CD4-positive, alpha-beta T cell (primary cell): ENCODE measurements at regions of chr19 and their contacts with region 1.

Region 1: DNA sequence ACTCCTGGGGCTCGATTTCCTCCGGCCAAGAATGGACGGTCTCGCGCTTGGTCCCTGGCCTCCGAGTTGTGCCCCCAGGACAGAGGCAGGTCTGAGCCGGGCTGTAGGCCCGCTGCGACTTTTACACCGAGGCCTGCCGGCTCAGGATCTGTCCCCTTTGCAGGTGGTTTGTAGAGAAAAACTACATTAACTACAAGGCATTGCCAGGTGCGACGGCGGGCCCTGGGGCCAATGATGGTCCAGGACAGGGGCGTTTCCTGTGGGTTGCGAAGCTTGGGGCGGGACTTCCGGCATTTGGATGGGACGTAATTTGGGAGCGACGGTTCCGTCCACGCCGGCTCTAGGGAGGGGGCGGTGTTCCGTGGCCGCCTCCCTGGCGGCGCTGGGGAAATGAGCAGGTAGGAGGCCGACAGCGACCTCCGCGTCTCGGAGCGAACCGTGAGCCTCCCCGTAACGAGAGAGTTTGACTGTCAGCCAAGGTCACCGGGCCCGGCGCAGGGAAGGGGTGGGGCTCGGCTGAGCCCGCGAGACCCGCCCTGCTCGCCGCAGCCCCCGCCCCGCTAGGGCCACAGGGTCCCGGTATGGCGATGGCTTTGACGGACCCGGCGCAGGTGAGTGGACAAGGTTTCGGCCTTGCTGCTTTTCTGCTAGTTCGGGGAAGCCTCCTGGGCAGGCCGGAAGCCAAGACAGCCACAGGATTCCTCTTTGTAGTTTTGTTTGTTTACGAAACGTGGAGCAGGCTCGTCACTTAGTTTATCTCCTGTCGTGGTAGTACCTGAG is at the start of gene ZNF805:
- DNase-seq: peak; percentile 94 to 98 (median 96)
- ATAC-seq: peak; percentile 88
- H3K4me3 ChIP-seq: peak within 1 kb of the TSS; percentile 89
- H3K4me3 Mint-ChIP-seq: peak within 1 kb of the TSS; percentile 93
- H3K27ac ChIP-seq: peak within 1 kb of the TSS; percentile 89 to 96
- H3K27ac Mint-ChIP-seq: peak within 1 kb of the TSS; percentile 92
- H3K4me1 ChIP-seq: peaks cover 32% of the 10 kb centered on the region
- H3K4me1 Mint-ChIP-seq: peaks cover 40% of the 10 kb centered on the region
- H3K27me3 ChIP-seq: no peaks in the 10 kb centered on the region
- H3K27me3 Mint-ChIP-seq: no peaks in the 10 kb centered on the region
- CTCF ChIP-seq: no peak
- total RNA-seq, gene ZNF805: 33.1 to 33.7 TPM

Region 2: DNA sequence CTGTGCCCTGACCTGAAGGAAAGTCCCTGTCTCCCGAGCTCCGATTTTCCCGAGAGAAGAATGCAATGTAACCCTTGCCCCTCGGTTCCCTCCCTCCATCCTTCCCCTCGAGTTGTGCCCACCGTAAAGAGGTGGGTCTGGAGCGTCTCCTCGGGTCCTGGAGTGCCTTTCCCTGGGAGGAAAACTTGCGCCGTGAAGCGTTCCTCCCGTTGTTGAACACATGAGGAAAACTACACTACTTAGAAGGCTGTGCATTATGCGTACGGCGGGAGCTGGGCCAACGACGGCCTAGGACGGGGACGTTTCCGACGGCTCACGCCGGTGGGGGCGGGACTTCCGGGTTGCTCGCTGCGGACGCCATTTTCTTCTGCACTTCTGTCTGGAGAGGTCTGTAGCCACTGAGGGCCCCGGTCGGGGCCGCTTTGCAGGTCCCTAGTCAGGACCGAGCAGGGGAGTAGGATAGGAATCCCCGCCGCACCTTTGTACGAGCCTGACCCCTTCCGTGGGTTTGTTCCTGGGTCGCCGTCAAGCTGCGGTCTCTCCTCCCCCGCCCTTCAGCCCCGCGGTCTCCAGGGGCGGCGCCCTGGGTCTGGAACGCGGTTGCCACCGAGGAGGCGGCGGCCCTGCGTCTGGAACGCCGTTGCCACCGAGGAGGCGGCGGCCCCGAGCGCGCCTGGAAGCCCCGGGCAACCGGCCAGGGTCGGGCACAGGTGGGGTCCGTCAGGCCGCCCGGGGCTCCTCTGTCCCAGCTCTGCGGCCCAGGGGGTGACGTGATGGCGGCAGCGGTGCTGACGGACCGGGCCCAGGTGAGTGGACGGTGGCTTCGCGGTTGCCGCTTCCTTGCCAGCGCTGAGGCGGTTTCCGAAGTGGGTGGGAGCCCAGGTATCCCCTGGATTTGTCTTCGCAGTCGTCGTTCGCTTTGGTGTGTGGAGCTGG is 49.1 kb before region 1 on chr19 and contains the start of gene ZNF264:
- CTCF ChIA-PET with region 1: no interaction called
- POLR2A ChIA-PET with region 1: interaction called, 6 read pairs
- intact Hi-C with region 1: loop called (anchors 1 to 2 kb)
- DNase-seq: peak; percentile 84 to 93 (median 87)
- ATAC-seq: peak; percentile 93
- H3K4me3 ChIP-seq: peak within 1 kb of the TSS; percentile 91
- H3K4me3 Mint-ChIP-seq: peak within 1 kb of the TSS; percentile 97
- H3K27ac ChIP-seq: peak within 1 kb of the TSS; percentile 70 to 89
- H3K27ac Mint-ChIP-seq: peak within 1 kb of the TSS; percentile 98
- H3K4me1 ChIP-seq: peaks cover 27% of the 10 kb centered on the region
- H3K4me1 Mint-ChIP-seq: peaks cover 41% of the 10 kb centered on the region
- H3K27me3 ChIP-seq: peaks cover 0 to 4% of the 10 kb centered on the region in 2 experiments
- H3K27me3 Mint-ChIP-seq: peaks cover 13% of the 10 kb centered on the region
- CTCF ChIP-seq: no peak
- total RNA-seq, gene ZNF264: 40.5 to 40.7 TPM

Region 3: GRCh38 chr19:57212109-57212508 is 28.4 kb before region 1 on chr19:
- CTCF ChIA-PET with region 1: no interaction called
- POLR2A ChIA-PET with region 1: no interaction called
- intact Hi-C with region 1: no loop called
- DNase-seq: no peak
- ATAC-seq: no peak
- H3K4me3 ChIP-seq: no peak overlapping the region
- H3K4me3 Mint-ChIP-seq: no peak overlapping the region
- H3K27ac ChIP-seq: no peak overlapping the region
- H3K27ac Mint-ChIP-seq: no peak overlapping the region
- H3K4me1 ChIP-seq: no peaks in the 10 kb centered on the region
- H3K4me1 Mint-ChIP-seq: no peaks in the 10 kb centered on the region
- H3K27me3 ChIP-seq: no peaks in the 10 kb centered on the region
- H3K27me3 Mint-ChIP-seq: no peaks in the 10 kb centered on the region
- CTCF ChIP-seq: no peak

Region 4: GRCh38 chr19:57279418-57280066 is 39.0 kb after region 1 on chr19:
- CTCF ChIA-PET with region 1: interaction called, 3 read pairs
- POLR2A ChIA-PET with region 1: interaction called, 4 read pairs
- intact Hi-C with region 1: loop called (anchors 1 kb)
- DNase-seq: peak; percentile 59 to 93 (median 70)
- ATAC-seq: peak; percentile 66
- H3K4me3 ChIP-seq: peak overlapping the region; percentile 76
- H3K4me3 Mint-ChIP-seq: no peak overlapping the region
- H3K27ac ChIP-seq: peak overlapping the region; percentile 95 to 100
- H3K27ac Mint-ChIP-seq: no peak overlapping the region
- H3K4me1 ChIP-seq: peaks cover 42% of the 10 kb centered on the region
- H3K4me1 Mint-ChIP-seq: peaks cover 27% of the 10 kb centered on the region
- H3K27me3 ChIP-seq: no peaks in the 10 kb centered on the region
- H3K27me3 Mint-ChIP-seq: no peaks in the 10 kb centered on the region
- CTCF ChIP-seq: no peak

Region 5: DNA sequence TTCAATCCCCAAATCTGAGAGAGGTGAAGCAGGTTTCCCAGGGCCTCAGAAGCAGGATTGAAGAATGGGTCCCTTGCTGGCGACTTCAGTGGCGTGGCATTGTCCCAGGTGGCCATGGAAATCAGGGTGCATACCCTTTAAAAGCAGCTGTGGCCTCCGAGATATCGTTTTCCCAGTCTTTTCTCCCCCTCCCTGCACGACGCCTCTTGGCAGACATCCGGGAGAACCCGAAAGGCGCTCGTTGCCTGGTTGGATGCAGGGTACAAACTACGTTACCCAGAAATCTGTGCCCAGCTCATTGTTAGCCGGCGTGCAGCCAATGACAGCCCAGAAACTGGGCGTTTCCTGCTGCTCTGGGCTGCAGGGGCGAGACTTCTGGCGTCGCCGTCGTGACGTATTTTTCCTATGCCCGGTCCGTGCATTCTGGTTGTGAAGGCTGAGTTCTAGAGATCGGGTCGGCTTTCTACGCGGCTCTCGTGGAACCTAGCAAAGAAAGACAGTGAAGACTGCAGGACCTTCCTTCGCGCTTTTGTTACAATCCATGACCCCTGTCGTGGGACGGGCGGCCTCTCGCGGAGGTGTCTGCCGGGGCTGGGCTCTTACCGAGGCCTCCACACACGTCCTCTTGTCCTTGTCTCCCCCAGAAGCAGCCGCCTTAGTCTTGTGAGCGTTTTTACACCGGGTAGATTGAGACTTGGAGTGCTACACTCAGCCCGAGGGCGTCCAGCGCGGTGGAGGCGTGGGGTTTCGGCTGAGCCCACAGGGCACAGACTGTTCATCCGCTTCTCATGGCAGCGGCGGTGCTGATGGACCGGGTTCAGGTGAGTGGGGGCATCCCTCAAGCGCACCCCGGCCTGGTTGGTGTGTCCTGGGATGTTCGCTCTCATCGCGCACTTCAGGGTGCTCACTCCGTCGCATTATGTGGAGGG is 110.6 kb after region 1 on chr19 and contains the start of gene ZNF304:
- CTCF ChIA-PET with region 1: no interaction called
- POLR2A ChIA-PET with region 1: interaction called, 7 read pairs
- intact Hi-C with region 1: loop called (anchors 2 to 5 kb)
- DNase-seq: peak; percentile 63 to 93 (median 76)
- ATAC-seq: peak; percentile 99
- H3K4me3 ChIP-seq: peak within 1 kb of the TSS; percentile 97
- H3K4me3 Mint-ChIP-seq: peak within 1 kb of the TSS; percentile 93
- H3K27ac ChIP-seq: peak within 1 kb of the TSS in 1 of 2 donors; percentile 80
- H3K27ac Mint-ChIP-seq: peak within 1 kb of the TSS; percentile 90
- H3K4me1 ChIP-seq: peaks cover 18% of the 10 kb centered on the region
- H3K4me1 Mint-ChIP-seq: peaks cover 35% of the 10 kb centered on the region
- H3K27me3 ChIP-seq: no peaks in the 10 kb centered on the region
- H3K27me3 Mint-ChIP-seq: peaks cover 9% of the 10 kb centered on the region
- CTCF ChIP-seq: no peak
- total RNA-seq, gene ZNF304: 4.9 to 5.4 TPM

Region 6: GRCh38 chr19:57389730-57390598 is 149.5 kb after region 1 on chr19 and contains the start of gene ZNF548:
- CTCF ChIA-PET with region 1: no interaction called
- POLR2A ChIA-PET with region 1: no interaction called
- intact Hi-C with region 1: loop called in 1 of 2 experiments (anchors 1 kb)
- DNase-seq: peak; percentile 87 to 99 (median 95)
- ATAC-seq: peak; percentile 96
- H3K4me3 ChIP-seq: peak within 1 kb of the TSS; percentile 86
- H3K4me3 Mint-ChIP-seq: peak within 1 kb of the TSS; percentile 98
- H3K27ac ChIP-seq: peak within 1 kb of the TSS; percentile 86 to 95
- H3K27ac Mint-ChIP-seq: peak within 1 kb of the TSS; percentile 95
- H3K4me1 ChIP-seq: peaks cover 18% of the 10 kb centered on the region
- H3K4me1 Mint-ChIP-seq: peaks cover 33% of the 10 kb centered on the region
- H3K27me3 ChIP-seq: no peaks in the 10 kb centered on the region
- H3K27me3 Mint-ChIP-seq: no peaks in the 10 kb centered on the region
- CTCF ChIP-seq: no peak
- total RNA-seq, gene ZNF548: 68.3 to 70.4 TPM